ENCODE measurements at regions of chr7 and their contacts with region 1.

Region 1: DNA sequence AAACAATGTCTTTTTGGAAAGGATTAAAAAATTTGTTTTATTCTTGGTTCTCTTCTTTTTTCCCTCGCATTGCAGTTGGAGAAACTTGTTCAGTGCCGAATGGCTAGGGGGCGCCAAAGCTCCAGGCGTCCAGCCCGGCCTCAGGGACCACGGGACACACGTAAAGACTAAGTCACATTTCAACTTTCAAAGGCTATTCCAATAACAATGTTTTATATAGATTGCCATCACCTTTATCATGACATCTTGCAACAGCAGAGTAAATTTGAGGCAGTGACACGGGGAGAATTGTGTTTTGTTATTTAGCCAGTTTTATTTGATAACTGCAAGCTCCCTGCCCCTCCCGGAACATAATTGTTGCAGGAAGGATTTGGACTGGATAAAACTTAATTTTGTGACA is 2.2 kb upstream of the IGFBP3 start:
- DNase-seq: peak; percentile 93 to 94
- H3K4me3 ChIP-seq: no peak overlapping the region
- H3K27ac ChIP-seq: peak overlapping the region; percentile 52
- H3K4me1 ChIP-seq: peaks cover 41% of the 10 kb centered on the region
- H3K27me3 ChIP-seq: no peaks in the 10 kb centered on the region
- CTCF ChIP-seq: peak; percentile 99

Region 2: GRCh38 chr7:45890902-45891461 is 32.3 kb before region 1 on chr7:
- CTCF ChIA-PET with region 1: interaction called, 5 read pairs
- POLR2A ChIA-PET with region 1: interaction called, 6 read pairs
- intact Hi-C with region 1: loop called (anchors 2 kb)
- DNase-seq: peak in 1 of 2 experiments; percentile 50
- H3K4me3 ChIP-seq: no peak overlapping the region
- H3K27ac ChIP-seq: no peak overlapping the region
- H3K4me1 ChIP-seq: peaks cover 30% of the 10 kb centered on the region
- H3K27me3 ChIP-seq: no peaks in the 10 kb centered on the region
- CTCF ChIP-seq: peak; percentile 98

Region 3: DNA sequence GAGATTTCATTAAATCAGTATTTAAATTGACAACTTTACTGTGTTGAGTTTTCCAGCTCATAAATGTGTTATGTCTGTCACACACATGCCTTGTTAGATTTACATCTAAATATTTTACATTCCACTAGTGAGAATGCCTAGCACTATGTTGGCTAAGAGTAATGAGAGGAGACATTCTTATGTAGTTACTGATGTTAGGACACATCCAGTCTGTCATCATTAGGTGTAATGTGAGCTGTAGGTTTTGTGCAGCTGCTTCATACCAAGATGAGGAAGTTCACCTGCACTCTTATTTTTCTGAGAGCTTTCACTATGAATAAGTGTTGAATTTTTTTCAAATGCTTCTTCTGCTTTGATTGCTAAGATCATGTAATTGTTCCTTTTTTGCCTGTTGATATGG is 215.8 kb after region 1 on chr7:
- CTCF ChIA-PET with region 1: no interaction called
- POLR2A ChIA-PET with region 1: no interaction called
- intact Hi-C with region 1: loop called (anchors 1 kb)
- DNase-seq: peak; percentile 40 to 100
- H3K4me3 ChIP-seq: no peak overlapping the region
- H3K27ac ChIP-seq: peak overlapping the region; percentile 83
- H3K4me1 ChIP-seq: peaks cover 29% of the 10 kb centered on the region
- H3K27me3 ChIP-seq: no peaks in the 10 kb centered on the region
- CTCF ChIP-seq: no peak

Region 4: GRCh38 chr7:46215987-46216567 is 292.8 kb after region 1 on chr7:
- CTCF ChIA-PET with region 1: interaction called, 3 read pairs
- POLR2A ChIA-PET with region 1: no interaction called
- intact Hi-C with region 1: loop called (anchors 1 kb)
- DNase-seq: no peak
- H3K4me3 ChIP-seq: no peak overlapping the region
- H3K27ac ChIP-seq: no peak overlapping the region
- H3K4me1 ChIP-seq: peaks cover 22% of the 10 kb centered on the region
- H3K27me3 ChIP-seq: no peaks in the 10 kb centered on the region
- CTCF ChIP-seq: no peak

Region 5: DNA sequence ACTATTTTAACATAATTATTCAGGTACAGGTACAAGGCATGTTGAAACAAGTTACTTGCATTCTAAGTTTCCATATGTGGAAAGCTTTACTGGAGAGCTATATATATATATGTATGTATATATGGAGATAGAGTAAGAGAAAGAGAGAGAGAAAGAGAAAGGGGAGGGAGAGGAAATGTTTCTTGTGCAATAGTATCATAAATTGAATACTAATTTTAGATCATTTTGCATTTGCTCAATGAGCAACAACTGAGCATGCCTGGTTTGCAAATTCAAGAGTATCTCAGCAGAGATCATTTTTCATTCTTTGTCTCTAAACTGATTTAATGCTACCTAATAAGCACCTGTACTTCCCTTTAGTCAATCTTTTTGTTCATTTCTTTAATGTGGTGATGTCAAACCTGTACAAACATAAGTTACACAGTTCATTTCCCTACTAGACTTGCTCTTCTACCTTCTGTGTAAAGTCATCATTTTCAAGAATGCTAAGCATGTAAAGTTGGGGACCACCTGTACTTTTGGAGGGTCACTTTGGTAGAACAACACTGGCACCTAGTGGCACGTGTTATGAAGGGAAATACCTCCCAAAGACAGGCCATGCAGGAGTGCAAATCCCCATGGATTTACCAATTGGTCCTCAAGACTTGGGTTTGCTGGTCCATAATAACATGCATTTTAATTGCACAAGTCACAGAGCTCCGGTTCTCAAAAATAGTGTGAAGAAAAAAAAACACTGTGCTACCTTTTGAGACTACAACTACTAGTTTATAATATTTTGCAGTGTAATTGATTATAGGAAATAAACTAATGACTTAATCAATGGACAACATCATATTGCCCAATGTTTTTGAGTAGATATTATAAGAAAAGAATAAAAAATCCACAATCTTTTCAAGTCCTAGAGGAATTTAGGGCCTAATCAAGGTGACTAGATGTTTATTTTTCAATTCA is 429.0 kb after region 1 on chr7:
- CTCF ChIA-PET with region 1: interaction called, 5 read pairs
- POLR2A ChIA-PET with region 1: no interaction called
- intact Hi-C with region 1: loop called (anchors 1 kb)
- DNase-seq: peak; percentile 81 to 88
- H3K4me3 ChIP-seq: no peak overlapping the region
- H3K27ac ChIP-seq: peak overlapping the region; percentile 14; the same call in 1 of the 2 replicates
- H3K4me1 ChIP-seq: peaks cover 8% of the 10 kb centered on the region
- H3K27me3 ChIP-seq: no peaks in the 10 kb centered on the region
- CTCF ChIP-seq: peak; percentile 97

Region 6: DNA sequence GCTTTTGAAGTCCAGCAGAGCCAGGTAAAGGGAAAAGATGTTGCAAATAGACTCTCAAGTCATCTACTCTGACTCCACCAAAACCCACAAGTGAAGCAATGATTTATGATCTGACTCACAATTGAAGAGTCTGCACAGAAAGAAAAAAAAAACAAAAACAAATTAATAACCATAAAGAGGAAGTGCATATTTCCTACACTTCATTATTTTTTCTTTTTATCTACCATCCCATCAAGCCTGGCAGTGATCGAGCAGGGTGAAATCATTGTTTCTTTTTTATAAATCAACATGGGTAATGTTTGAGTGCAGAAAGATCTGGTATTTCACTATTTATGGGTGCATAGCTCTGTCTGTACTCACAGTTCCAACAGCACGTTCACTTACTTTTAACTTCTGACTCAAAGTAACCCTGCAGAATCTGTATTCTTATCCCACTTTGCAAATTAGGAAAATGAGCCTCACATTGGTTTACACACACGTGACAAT is 829.6 kb after region 1 on chr7:
- CTCF ChIA-PET with region 1: no interaction called
- POLR2A ChIA-PET with region 1: no interaction called
- intact Hi-C with region 1: loop called (anchors 2 kb)
- DNase-seq: peak; percentile 32 to 96
- H3K4me3 ChIP-seq: peak overlapping the region; percentile 23; the same call in 1 of the 2 replicates
- H3K27ac ChIP-seq: peak overlapping the region; percentile 74
- H3K4me1 ChIP-seq: peaks cover 41% of the 10 kb centered on the region
- H3K27me3 ChIP-seq: no peaks in the 10 kb centered on the region
- CTCF ChIP-seq: no peak

Region 7: DNA sequence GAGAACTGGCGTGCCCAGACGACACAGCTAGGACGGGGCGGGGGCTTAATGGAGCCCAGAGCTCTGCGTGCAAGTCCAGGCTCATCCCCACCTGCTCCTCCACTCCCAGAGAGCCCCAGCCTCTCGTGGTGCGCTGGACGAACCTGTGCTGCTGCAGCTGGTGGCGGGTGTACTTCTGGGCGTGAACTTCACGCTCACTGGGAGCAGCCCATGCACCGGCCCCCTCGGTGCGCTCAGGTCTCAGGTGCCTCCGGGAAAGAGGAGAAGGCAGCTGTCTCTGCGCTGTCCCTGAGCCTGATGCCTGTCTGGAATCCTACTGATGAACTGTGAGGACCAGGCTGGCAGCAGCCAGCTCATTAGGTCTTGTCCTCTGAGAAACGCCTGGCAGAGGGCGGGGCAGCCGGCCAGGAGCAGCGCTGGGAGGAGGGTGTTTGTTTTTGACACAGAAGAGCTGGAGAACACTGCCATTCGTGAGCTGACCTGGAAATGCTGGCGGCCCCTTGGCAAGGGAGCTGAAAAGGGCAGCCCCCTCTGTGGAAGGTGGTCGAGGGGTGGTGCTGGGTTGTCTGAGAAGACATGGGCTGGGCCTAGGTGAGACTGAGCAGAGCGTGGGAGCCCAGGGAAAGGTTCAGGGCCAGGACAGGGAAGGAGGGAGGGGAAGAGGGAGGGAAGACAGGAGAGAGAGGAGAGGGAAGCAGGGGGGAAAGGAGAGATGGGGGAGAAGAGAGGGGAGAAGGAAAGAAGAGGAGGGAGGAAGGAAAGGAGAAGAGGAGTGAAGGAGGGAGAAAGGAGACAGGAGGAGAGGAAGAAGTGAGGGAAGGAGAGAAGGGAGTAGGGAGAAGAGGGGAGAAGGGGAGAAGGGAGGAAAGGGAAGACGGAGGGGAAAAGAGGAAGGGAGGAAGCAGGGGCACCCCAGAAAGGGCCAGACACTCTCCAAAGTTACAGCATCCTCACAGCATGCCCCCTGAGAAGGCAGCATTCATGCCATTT is 1712.1 kb after region 1 on chr7:
- CTCF ChIA-PET with region 1: no interaction called
- POLR2A ChIA-PET with region 1: interaction called, 31 read pairs
- intact Hi-C with region 1: no loop called
- DNase-seq: peak; percentile 80 to 82
- H3K4me3 ChIP-seq: peak overlapping the region; percentile 48
- H3K27ac ChIP-seq: peak overlapping the region; percentile 40
- H3K4me1 ChIP-seq: peaks cover 33% of the 10 kb centered on the region
- H3K27me3 ChIP-seq: no peaks in the 10 kb centered on the region
- CTCF ChIP-seq: no peak